Mammary epithelial cell (primary cell): ENCODE measurements at regions of chr5 and their contacts with region 1.

Region 1: DNA sequence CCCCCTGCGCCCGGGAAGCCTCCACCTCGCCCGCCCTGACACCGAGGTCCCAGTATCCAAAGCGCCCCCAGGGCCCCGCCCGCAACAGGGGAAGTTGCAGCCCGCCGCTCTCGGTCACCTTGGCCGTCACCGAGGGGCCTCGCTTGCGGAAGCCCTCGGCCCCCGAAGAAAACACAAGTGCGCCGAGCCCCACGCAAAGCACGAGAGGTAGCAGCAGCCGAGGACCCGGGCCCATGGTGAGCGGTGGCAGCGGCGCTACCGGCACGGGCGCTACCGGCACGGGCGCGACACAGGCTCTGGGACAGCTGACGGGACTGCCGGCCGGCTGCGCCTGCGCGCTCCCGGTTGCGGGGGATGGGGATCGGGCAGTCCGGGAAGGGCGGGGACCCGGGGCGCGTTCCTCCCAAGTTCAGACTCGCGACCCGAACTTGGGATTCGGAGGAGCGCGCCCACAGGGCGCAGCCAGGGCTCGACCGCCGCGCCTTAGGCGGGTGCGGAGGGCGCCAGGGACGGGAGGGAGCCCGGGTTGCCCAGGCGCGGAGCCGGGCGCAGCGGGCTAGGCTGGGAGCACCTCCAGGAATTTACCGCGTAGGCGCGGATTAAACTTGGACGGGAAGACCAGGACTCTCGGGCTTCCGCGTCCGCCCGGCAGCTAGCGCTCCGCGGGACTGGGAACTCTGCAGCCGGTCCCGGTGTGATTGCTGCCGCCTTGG is at the start of gene PPIC:
- DNase-seq: peak; percentile 85
- H3K4me3 ChIP-seq: peak within 1 kb of the TSS; percentile 63 to 97 (median 81)
- H3K27ac ChIP-seq: peak within 1 kb of the TSS; percentile 59
- H3K4me1 ChIP-seq: peaks cover 7% of the 10 kb centered on the region
- H3K27me3 ChIP-seq: no peaks in the 10 kb centered on the region
- CTCF ChIP-seq: no peak
- total RNA-seq, gene PPIC: 26.5 to 31.0 TPM

Region 2: DNA sequence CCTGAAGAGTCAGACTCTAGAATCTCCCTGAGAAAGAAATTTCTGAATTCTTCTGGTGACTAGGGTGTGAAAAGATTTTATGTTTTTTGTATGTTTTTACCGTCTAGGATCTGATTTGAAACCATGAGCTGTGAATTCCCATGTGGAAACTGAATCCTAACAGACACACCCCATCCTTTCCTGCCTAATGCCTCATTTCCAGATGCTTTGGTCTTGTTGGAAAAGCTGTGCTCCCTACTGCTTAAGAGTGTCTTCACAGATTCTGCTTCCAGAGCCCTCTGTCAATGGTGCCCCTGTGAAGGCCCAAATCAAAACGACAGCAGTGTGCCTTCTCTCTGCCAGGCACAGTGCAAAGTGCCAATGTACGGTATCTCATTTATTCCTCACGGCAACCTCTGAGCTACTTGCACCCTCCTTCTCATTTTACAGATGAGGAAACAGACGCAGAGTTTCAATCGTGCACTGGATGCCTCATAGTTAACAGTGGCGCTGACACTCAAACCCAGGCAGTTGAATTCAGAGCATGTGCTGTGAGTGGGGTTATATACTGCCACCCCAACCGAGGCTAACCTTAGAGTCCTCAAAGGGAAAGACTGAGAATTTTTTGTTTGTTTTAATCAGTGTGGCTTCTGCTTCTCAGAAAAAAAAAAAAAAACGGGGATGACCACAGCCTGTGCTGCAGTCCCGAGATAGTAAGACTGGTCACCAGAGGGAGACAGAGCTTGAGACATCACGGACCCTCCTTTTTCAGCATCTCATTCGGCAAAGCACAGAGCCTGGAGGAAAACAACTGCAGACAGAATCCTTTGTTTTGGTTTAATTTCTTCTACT is 536.1 kb before region 1 on chr5:
- CTCF ChIA-PET with region 1: no interaction called
- dilution Hi-C with region 1: no loop called
- in situ Hi-C with region 1: no loop called
- intact Hi-C with region 1: loop called (anchors 10 kb)
- DNase-seq: peak; percentile 30
- H3K4me3 ChIP-seq: no peak overlapping the region
- H3K27ac ChIP-seq: no peak overlapping the region
- H3K4me1 ChIP-seq: no peaks in the 10 kb centered on the region
- H3K27me3 ChIP-seq: no peaks in the 10 kb centered on the region
- CTCF ChIP-seq: peak; percentile 49 to 62

Region 3: DNA sequence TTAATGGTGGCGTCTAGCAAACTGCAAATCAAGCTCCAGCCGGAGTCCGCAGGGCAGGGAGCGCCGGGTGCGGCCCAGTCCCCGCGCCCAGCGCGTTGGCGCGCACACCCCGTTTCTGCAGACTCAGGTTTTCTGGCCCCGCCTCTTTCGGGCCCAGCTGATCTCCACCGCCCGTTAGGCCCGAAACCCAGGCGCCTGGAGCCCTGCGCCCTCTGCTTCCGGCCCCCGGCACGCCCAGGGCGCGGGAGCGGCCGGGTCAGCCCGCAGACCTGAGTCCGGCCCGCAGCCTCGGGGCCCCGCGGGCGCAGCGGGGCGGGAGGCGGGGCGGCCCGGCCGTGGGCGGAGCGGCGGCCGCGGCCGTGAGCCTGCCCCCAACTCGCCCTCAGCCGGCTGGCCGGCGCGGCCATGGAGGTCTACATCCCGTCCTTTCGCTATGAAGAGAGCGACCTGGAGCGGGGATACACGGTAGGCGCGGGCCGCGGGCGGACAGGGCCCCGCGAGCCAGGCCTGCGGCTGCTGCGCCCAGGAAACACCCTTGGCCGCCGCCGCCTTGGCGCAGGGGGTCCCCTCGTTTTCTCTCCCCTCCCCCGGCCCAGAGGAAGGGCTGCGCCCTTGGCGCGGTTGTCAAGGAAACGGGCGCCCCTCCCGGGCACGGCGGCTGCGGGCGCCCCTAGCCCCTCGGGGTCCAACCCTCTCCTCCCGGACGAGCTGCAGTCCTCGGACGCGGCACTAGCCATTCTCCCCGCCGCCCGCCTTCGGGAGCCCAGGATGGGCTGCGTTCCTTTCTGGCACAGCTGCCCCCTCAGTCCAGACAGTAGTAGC is 191.1 kb before region 1 on chr5 and contains the start of gene SNX24:
- CTCF ChIA-PET with region 1: interaction called, 13 read pairs
- dilution Hi-C with region 1: no loop called
- in situ Hi-C with region 1: no loop called
- intact Hi-C with region 1: loop called (anchors 5 kb)
- DNase-seq: peak; percentile 74
- H3K4me3 ChIP-seq: peak within 1 kb of the TSS; percentile 60 to 94 (median 81)
- H3K27ac ChIP-seq: peak within 1 kb of the TSS; percentile 87
- H3K4me1 ChIP-seq: peaks cover 43% of the 10 kb centered on the region
- H3K27me3 ChIP-seq: no peaks in the 10 kb centered on the region
- CTCF ChIP-seq: no peak
- total RNA-seq, gene SNX24: 46.8 to 58.2 TPM

Region 4: DNA sequence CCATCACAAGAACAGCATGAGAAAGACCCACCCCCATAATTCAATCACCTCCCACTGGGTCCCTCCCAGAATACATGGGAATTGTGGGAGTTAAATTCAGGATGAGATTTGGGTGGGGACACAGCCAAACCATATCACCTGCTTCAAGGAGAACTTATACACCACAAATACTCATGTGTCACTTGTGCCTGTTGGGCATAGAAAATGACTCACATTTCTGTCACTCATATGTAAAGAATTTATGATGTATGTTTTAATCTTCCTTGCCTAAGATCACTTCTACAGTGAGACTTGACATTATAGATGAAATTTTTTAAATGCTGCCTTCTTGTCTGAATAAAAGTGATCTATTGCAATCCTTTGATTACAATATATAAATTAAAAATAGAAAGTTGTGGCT is 29.5 kb after region 1 on chr5:
- CTCF ChIA-PET with region 1: no interaction called
- dilution Hi-C with region 1: no loop called
- in situ Hi-C with region 1: no loop called
- intact Hi-C with region 1: loop called (anchors 2 kb)
- DNase-seq: no peak
- H3K4me3 ChIP-seq: no peak overlapping the region
- H3K27ac ChIP-seq: no peak overlapping the region
- H3K4me1 ChIP-seq: no peaks in the 10 kb centered on the region
- H3K27me3 ChIP-seq: no peaks in the 10 kb centered on the region
- CTCF ChIP-seq: no peak

Region 5: GRCh38 chr5:123089914-123090670 is 53.5 kb after region 1 on chr5:
- CTCF ChIA-PET with region 1: no interaction called
- dilution Hi-C with region 1: no loop called
- in situ Hi-C with region 1: no loop called
- intact Hi-C with region 1: loop called (anchors 2 kb)
- DNase-seq: no peak
- H3K4me3 ChIP-seq: peak overlapping the region in 2 of 3 experiments; percentile 25 to 40
- H3K27ac ChIP-seq: no peak overlapping the region
- H3K4me1 ChIP-seq: peaks cover 22% of the 10 kb centered on the region
- H3K27me3 ChIP-seq: peaks cover 83% of the 10 kb centered on the region
- CTCF ChIP-seq: no peak

Region 6: DNA sequence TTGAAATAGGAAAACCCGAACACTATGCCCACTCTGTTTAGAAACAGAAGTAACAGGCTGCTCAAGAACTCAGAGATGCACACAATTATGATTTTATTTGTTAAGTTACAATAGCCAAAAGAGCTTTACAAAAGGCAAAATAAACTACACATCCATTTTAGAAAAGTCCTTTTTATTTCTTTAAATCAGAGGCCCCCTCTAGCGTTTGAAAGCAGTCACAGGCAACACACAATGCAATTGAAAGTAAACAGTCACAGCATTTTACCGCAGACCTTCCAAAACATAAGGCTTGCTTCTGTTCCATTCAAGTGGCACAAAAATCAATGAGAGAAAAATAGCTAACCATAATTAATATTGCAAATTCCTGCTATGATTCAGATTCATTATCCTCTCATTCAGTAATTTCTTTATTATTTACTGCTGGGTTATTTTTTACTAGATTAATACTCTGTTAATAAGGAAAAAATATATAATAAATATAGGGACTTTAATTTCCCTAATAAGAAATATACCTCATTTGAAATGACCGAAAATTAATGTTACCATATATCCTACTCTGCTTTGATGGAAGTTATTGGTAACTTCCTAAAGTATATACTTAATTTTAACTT is 308.4 kb after region 1 on chr5:
- CTCF ChIA-PET with region 1: no interaction called
- dilution Hi-C with region 1: no loop called
- in situ Hi-C with region 1: no loop called
- intact Hi-C with region 1: loop called (anchors 10 kb)
- DNase-seq: peak; percentile 4
- H3K4me3 ChIP-seq: no peak overlapping the region
- H3K27ac ChIP-seq: no peak overlapping the region
- H3K4me1 ChIP-seq: no peaks in the 10 kb centered on the region
- H3K27me3 ChIP-seq: no peaks in the 10 kb centered on the region
- CTCF ChIP-seq: peak; percentile 42 to 51